MCF 10A (cell line): ENCODE measurements at regions of chr2 and their contacts with region 1.

Region 1: DNA sequence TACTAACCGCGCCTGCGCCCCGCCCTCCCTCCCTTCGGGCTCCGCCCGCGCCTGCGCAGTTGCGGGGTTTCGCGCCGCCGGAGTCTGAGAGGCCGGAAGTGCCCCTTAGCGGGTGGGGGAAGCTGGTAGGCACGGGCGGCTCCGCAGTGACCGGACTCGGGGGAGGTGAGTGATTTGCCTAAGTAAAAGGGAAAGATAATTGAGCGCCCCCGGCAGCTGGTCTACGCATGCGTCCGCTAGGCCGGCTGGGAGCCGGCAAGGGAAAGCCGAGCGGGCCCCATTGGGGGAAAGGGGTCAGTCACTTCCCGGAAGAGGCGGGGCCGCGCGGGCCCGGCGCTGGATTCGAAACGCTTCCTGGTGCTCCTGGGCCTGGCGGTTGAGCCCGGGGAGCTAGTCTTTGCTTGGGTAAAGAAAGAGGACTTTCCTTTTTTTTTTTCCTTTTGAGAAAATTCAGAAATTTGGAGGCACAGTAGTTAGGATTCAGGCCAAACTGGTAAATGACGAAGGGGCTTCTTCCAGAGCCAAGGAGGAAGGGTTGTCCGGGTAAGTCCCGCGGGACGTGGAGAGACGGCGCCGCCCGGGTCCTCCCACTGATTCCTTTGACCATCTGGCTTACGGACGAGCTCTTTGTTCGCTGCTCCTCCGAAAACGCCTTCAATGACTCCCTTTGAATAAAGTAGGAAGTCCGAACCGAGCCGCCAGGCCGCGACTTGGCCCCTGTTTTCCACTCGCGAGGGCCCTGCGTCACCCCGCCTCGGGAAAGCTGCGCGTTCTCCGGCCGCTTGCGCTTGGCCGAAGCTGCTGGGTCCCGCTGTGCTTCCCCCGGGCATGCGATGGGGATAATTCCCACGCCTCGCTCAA is at the starts of genes GEN1 and SMC6:
- DNase-seq: peak; percentile 91
- H3K4me3 Mint-ChIP-seq: peak within 1 kb of the TSS; percentile 82
- H3K27ac Mint-ChIP-seq: peak within 1 kb of the TSS; percentile 97
- H3K4me1 Mint-ChIP-seq: peaks cover 34% of the 10 kb centered on the region
- H3K27me3 Mint-ChIP-seq: no peaks in the 10 kb centered on the region
- CTCF ChIP-seq: no peak
- total RNA-seq, gene GEN1: 13.5 and 19.8 TPM in 2 replicates
- total RNA-seq, gene SMC6: 21.0 and 24.7 TPM in 2 replicates

Region 2: DNA sequence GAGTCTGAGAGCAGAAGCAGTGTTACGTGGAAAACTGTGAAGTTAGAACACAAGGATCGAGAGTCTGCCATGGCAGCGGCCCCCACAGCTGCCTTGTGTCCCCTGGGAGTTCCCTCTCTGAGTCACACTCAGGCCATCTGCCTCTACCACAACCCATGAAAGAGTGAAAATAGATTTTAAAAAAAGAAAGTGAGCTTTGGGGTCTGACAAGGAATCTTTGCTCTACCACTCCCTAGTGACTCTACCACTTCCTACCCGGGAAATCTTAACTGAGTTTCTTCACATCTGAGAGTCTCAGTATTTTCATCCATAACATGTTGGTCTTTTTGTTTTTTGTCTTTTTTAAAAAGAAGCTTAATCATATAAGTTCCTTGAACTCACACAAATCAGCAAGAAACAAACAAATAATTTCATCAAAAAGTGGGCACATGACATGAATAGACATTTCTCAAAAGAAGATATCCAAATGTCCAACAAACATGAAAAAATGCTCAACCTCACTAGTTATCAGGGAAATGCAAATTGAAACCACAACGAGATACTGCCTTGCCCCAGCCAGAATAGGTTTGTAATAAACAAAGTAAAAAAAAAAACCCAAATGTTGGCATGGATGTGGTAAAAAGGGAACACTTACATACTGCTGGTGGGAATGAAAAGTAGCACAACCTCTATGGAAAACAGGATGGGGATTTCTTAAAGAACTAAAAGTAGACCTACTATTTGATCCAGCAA is 59.9 kb after region 1 on chr2:
- CTCF ChIA-PET with region 1: interaction called, 12 read pairs
- POLR2A ChIA-PET with region 1: interaction called, 136 read pairs
- intact Hi-C with region 1: no loop called
- DNase-seq: no peak
- H3K4me3 Mint-ChIP-seq: no peak overlapping the region
- H3K27ac Mint-ChIP-seq: peak overlapping the region; percentile 73
- H3K4me1 Mint-ChIP-seq: peaks cover 39% of the 10 kb centered on the region
- H3K27me3 Mint-ChIP-seq: no peaks in the 10 kb centered on the region
- CTCF ChIP-seq: no peak

Region 3: DNA sequence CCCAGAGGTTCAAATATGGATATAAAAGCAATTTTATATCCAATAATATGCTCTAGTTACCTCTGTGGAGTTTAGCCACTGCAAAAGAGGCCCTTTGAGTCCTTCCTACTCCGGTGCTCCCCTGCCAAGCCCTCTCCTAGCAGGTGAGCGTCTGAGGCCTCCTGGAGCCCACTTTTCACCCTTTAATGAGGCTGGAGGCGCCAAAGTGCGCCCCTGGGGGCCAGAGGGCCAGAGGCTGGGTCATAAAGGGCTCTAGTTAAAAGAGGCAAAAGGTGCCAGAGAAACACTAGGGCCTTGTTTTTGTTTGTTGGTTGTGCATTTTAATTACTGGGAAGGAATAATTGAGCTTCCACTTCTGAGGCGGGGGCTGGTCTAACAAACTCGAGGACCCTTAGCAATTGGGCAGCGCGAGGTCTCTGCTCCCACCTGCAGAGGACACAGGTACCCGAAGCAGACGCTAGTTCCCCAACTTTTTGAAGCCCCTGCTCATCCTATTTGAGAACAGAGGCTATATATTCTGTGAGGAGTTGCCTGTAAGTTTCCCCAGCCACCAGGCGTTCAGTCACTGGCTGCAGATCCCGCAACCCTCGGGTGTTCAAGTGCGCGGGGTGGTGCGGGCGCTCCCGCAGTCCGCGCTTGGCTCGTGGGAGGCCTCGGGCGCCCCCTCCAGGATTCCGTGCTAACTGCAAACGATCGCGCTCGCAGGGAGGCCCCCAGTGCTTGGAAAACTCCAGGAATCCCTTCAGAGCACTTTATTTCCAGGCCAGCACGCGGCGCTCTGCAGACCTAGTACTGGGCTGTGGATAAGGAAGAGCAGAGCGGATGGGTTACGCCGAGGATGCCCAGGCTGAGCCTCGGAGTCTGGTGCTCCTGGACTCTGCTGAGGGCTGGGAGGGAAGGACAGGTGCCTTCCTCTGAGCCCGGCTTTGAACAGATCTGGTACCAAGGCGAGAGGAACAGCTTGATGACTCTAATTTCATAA is 76.3 kb after region 1 on chr2:
- CTCF ChIA-PET with region 1: interaction called, 53 read pairs
- POLR2A ChIA-PET with region 1: interaction called, 9 read pairs
- intact Hi-C with region 1: loop called (anchors 2 kb)
- DNase-seq: peak; percentile 83
- H3K4me3 Mint-ChIP-seq: peak overlapping the region; percentile 48
- H3K27ac Mint-ChIP-seq: no peak overlapping the region
- H3K4me1 Mint-ChIP-seq: peaks cover 6% of the 10 kb centered on the region
- H3K27me3 Mint-ChIP-seq: no peaks in the 10 kb centered on the region
- CTCF ChIP-seq: peak; percentile 86

Region 4: DNA sequence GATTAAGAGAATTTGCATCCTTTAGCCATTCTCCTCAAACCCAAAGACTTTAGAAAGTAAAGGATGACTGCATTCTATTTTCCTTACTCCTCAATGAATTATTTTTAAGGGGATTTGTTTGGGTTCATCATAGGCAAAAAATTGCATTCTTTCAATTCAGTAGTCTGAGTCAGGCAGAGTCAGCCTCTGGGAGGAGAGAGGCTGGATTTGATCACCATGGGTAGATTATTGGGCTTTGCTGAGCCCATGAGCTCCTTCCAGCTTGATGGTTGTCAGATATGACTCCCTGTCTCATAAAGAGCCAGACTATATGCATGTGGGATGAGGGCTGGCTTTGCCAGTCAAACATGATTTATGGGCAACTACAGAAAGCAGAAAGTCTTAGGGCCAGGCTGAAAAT is 225.7 kb after region 1 on chr2:
- CTCF ChIA-PET with region 1: no interaction called
- POLR2A ChIA-PET with region 1: no interaction called
- intact Hi-C with region 1: no loop called
- DNase-seq: no peak
- H3K4me3 Mint-ChIP-seq: no peak overlapping the region
- H3K27ac Mint-ChIP-seq: no peak overlapping the region
- H3K4me1 Mint-ChIP-seq: peaks cover 12% of the 10 kb centered on the region
- H3K27me3 Mint-ChIP-seq: no peaks in the 10 kb centered on the region
- CTCF ChIP-seq: no peak

Region 5: DNA sequence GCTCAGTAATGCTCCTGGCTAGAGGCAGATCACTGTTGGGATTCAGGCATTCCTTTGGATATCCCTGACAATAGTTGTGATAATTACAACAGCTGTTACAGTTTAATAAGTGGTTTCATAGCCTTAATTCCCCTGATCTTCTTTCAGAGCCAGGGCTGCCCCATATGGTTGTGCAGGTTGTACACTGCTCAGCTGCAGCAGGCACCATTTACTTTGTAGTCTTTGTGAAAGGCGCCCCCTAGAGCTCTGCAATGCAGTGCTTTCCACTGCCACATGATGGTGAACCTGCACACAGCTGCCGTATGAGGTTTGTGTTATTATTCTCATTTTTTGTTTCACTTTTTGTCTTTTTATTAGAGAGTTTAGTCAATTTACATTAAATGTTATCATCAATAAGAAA is 363.6 kb after region 1 on chr2:
- CTCF ChIA-PET with region 1: no interaction called
- POLR2A ChIA-PET with region 1: no interaction called
- intact Hi-C with region 1: loop called (anchors 5 kb)
- DNase-seq: peak; percentile 72
- H3K4me3 Mint-ChIP-seq: no peak overlapping the region
- H3K27ac Mint-ChIP-seq: no peak overlapping the region
- H3K4me1 Mint-ChIP-seq: no peaks in the 10 kb centered on the region
- H3K27me3 Mint-ChIP-seq: peaks cover 34% of the 10 kb centered on the region
- CTCF ChIP-seq: peak; percentile 92

Region 6: GRCh38 chr2:18178736-18179349 is 424.8 kb after region 1 on chr2:
- CTCF ChIA-PET with region 1: interaction called, 3 read pairs
- POLR2A ChIA-PET with region 1: no interaction called
- intact Hi-C with region 1: loop called (anchors 1 kb)
- DNase-seq: peak; percentile 74
- H3K4me3 Mint-ChIP-seq: no peak overlapping the region
- H3K27ac Mint-ChIP-seq: no peak overlapping the region
- H3K4me1 Mint-ChIP-seq: no peaks in the 10 kb centered on the region
- H3K27me3 Mint-ChIP-seq: peaks cover 11% of the 10 kb centered on the region
- CTCF ChIP-seq: peak; percentile 77